Sigmoid colon (tissue), 7 donors: ENCODE measurements at regions of chr22 and their contacts with region 1.

Region 1: GRCh38 chr22:36470162-36470993 is 11.1 kb downstream of the TXN2 start:
- DNase-seq: peak; percentile 95
- H3K4me3 ChIP-seq: peak overlapping the region in 3 of 4 donors; percentile 37 to 50 (median 42)
- H3K27ac ChIP-seq: peak overlapping the region; percentile 87 to 98 (median 94)
- H3K4me1 ChIP-seq: peaks cover 0 to 86% (median 78%) of the 10 kb centered on the region in 4 donors
- H3K27me3 ChIP-seq: no peaks in the 10 kb centered on the region
- CTCF ChIP-seq: peak in 3 of 4 experiments; percentile 91 to 92 (median 92)
- EP300 ChIP-seq: no peak
- POLR2A ChIP-seq: peak in 1 of 2 donors; percentile 5

Region 2: DNA sequence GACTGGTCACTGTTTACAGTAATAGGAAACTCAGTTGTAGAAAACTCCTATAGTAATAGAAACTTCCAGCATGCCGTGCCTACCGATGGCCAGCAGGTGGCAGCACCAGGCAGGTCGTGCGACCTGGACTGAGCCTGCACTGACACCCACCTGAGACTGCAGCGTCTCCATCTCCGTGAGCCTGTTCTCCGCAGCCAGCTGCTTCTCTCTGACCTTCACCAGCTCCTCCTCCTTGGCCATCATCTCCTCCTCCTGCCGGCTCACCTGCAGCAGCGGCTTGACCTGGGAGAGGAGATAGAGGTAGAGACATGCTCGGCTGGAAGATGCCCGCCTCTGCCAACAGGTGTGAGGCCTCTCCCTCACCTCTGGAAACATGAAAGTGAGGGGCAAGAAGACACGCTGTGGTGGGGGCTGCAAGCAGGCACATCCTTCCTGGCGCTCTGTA is 169.0 kb before region 1 on chr22:
- intact Hi-C with region 1: loop called (anchors 1 kb)
- DNase-seq: peak; percentile 92
- H3K4me3 ChIP-seq: no peak overlapping the region
- H3K27ac ChIP-seq: peak overlapping the region; percentile 77 to 100 (median 89)
- H3K4me1 ChIP-seq: peaks cover 0 to 61% (median 59%) of the 10 kb centered on the region in 4 donors
- H3K27me3 ChIP-seq: no peaks in the 10 kb centered on the region
- CTCF ChIP-seq: peak; percentile 89 to 96 (median 94)
- EP300 ChIP-seq: no peak
- POLR2A ChIP-seq: no peak

Region 3: DNA sequence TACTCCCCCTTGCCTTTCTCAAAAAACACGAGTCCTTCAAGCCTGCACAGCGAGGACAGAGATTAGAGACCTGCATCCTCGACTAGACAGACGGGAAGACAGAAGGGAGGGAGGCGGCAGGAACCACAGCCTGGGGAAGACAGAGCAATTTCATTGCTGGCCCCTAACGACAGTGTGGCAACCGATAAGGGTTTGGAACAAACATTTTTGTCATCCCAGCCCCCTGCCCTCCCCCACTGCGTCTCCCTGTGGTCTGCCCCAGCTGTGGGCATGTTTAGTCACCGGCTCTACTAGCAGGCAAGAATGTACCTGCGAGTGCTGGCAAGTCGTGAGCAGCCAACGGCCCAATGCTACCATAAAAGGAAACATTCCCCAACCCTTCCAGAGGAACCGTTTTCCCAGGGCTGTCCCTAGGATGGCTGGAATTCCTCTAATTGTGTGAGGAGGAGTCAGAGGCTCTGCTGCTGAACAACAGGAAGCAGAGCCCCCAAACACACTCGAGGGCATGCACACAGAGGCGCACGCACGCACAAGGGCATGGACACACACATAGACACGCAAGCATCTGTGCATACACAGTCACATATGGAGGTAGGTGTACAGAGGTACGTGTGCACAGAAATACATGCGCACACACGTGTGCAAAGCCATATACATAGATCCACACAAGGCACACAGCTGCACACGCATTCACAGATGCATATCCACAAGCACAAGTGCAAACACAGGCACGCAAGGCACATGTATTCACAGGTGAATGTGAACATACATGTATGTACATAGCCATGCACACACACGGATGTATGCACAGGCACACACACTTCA is 140.9 kb before region 1 on chr22:
- intact Hi-C with region 1: loop called (anchors 5 kb)
- DNase-seq: no peak
- H3K4me3 ChIP-seq: peak overlapping the region in 3 of 4 donors; percentile 7 to 32 (median 11)
- H3K27ac ChIP-seq: peak overlapping the region; percentile 96 to 100 (median 99)
- H3K4me1 ChIP-seq: peaks cover 4 to 100% (median 100%) of the 10 kb centered on the region in 4 donors
- H3K27me3 ChIP-seq: no peaks in the 10 kb centered on the region
- CTCF ChIP-seq: no peak
- EP300 ChIP-seq: peak in 3 of 4 donors; percentile 37 to 94 (median 85)
- POLR2A ChIP-seq: peak in 1 of 2 donors; percentile 18

Region 4: GRCh38 chr22:36369922-36370791 is 100.2 kb before region 1 on chr22:
- intact Hi-C with region 1: loop called (anchors 5 kb)
- DNase-seq: peak; percentile 86
- H3K4me3 ChIP-seq: peak overlapping the region in 3 of 4 donors; percentile 19 to 23 (median 21)
- H3K27ac ChIP-seq: peak overlapping the region; percentile 98 to 100 (median 100)
- H3K4me1 ChIP-seq: peaks cover 3 to 100% (median 100%) of the 10 kb centered on the region in 4 donors
- H3K27me3 ChIP-seq: no peaks in the 10 kb centered on the region
- CTCF ChIP-seq: no peak
- EP300 ChIP-seq: no peak
- POLR2A ChIP-seq: peak in 1 of 2 donors; percentile 19

Region 5: DNA sequence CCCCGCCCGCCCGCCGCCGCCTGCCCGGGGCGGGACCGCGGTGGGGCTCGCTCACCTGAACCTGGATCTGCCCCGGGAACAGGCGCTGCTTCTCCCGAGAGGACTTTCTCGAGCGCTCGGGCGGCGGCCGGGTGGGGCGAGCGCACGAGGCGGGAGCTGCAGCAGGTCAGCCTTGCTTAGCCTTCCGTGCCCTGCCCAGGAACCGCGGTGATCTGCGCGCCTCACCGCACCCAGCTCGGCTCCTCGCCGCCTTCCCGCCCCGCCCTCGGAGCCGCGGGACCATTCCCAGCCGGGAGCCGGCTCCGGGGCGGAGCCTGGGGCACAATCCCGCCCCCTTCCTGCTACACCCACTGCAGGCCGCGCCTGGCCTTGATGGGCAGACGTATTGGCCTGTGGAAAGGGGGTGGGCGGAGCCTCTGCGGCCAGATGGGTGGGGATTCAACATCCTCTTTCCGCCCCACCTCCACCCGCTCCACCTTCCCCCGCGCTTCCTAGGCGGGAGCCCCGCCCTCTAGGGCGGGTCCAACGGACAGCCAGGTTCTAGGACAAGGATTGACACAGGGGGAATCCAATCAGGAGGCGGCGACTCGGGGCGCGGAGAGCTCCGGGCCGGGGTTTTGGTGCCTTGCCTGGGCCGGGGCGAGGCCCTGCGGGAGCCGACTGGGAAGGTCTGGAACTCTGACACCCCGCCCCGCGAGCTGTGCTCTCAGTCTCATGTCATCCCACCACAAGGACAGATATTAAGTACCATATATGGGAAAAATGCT is 82.4 kb before region 1 on chr22 and contains the start of gene MYH9:
- intact Hi-C with region 1: loop called (anchors 2 kb)
- DNase-seq: peak; percentile 100
- H3K4me3 ChIP-seq: peak within 1 kb of the TSS; percentile 95 to 99 (median 98)
- H3K27ac ChIP-seq: peak within 1 kb of the TSS; percentile 98 to 100 (median 100)
- H3K4me1 ChIP-seq: peaks cover 0 to 38% (median 26%) of the 10 kb centered on the region in 4 donors
- H3K27me3 ChIP-seq: no peaks in the 10 kb centered on the region
- CTCF ChIP-seq: no peak
- EP300 ChIP-seq: peak in 1 of 4 donors; percentile 94
- POLR2A ChIP-seq: peak; percentile 96 to 98
- total RNA-seq, gene MYH9: 147 to 273 (median 184) TPM

Region 6: DNA sequence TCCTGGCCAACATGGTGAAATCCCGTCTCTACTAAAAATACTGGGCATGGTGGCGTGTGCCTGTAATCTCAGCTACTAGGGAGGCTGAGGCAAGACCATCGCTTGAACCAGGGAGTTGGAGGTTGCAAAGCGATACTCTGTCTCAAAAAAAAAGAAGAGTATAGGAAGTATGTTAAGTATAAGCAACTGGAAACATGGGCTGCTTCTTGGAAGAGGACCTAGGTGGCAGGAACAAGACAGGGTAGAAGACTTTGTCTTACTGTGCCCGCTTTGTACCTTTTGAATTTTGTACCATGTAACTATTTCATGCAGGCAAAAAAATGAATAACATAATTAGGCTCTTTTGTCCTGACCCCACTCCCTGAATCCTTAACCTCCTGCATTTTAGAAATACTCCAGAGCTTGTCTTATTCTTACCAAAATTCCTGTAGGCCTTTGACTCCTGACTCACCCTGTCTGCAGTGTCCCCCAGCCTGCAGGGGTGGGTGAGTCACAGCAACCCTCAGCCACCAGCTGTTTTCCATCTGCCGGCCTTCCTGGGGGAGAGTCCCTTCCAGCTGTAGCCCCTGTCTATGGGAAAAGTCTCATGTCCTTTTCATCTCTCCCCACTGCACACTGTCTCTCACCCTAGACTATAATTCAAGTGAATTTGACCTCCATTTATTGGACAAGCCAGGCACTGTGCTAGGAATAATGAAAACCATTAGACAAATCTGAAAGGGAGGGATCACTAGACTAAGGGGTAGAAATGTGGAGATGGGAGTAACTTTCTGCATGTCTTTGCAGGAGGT is 30.7 kb before region 1 on chr22:
- intact Hi-C with region 1: no loop called
- DNase-seq: peak; percentile 89
- H3K4me3 ChIP-seq: no peak overlapping the region
- H3K27ac ChIP-seq: peak overlapping the region; percentile 9 to 63 (median 42)
- H3K4me1 ChIP-seq: peaks cover 0 to 13% (median 6%) of the 10 kb centered on the region in 4 donors
- H3K27me3 ChIP-seq: no peaks in the 10 kb centered on the region
- CTCF ChIP-seq: no peak
- EP300 ChIP-seq: no peak
- POLR2A ChIP-seq: no peak

Region 7: GRCh38 chr22:36659762-36660509 is 189.6 kb after region 1 on chr22:
- intact Hi-C with region 1: no loop called
- DNase-seq: peak; percentile 96
- H3K4me3 ChIP-seq: no peak overlapping the region
- H3K27ac ChIP-seq: peak overlapping the region in 3 of 4 donors; percentile 44 to 77 (median 52)
- H3K4me1 ChIP-seq: peaks cover 0 to 22% (median 19%) of the 10 kb centered on the region in 4 donors
- H3K27me3 ChIP-seq: no peaks in the 10 kb centered on the region
- CTCF ChIP-seq: no peak
- EP300 ChIP-seq: no peak
- POLR2A ChIP-seq: no peak